Caco-2 (cell line): ENCODE measurements at regions of chr7 and their contacts with region 1.

Region 1: DNA sequence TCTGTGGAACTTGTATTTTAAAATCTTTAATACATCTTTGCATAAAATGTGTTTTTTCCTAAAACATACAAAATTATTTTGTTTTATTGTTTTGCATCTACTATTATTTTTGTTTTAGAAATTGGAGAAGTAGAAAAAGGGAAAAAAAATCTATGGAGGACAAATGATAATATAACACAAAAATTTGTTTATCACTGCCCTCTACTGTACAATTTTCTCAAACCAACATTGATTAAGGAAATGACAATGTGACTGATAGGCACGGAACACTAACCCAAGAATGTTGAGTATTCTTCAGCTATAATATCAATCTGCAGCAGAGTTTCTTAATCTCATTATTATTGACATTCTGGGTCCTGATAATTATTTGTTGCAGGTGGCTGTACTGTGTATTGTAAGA is 9.5 kb upstream of the ING3 start:
- DNase-seq: no peak
- H3K4me3 ChIP-seq: no peak overlapping the region
- H3K4me3 Mint-ChIP-seq: no peak overlapping the region
- H3K27ac Mint-ChIP-seq: no peak overlapping the region
- H3K4me1 ChIP-seq: no peaks in the 10 kb centered on the region
- H3K4me1 Mint-ChIP-seq: no peaks in the 10 kb centered on the region
- H3K27me3 ChIP-seq: no peaks in the 10 kb centered on the region; the same call in 1 of the 2 replicates
- H3K27me3 Mint-ChIP-seq: peaks cover under 1% of the 10 kb centered on the region
- CTCF ChIP-seq: no peak

Region 2: DNA sequence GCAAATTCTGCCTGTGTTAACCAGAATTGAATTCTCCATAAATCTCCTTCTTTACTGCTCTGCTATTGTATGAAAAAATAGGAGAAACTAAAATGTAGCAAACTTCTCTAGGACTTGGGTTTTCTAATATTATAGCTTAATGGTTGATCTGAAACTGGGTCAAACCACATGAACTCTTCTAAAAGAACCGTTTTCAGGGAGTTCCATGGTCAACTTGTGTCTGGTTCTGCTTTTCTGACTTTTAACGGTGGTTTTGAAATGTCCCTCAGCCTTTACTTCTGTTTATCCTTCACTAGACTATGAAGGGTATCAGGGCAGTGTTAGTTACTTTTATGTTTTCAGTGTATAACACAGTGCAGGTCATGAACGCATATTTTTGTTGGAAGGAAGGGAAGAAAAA is 325.4 kb before region 1 on chr7:
- CTCF ChIA-PET with region 1: no interaction called
- POLR2A ChIA-PET with region 1: no interaction called
- intact Hi-C with region 1: no loop called
- DNase-seq: no peak
- H3K4me3 ChIP-seq: no peak overlapping the region
- H3K4me3 Mint-ChIP-seq: no peak overlapping the region
- H3K27ac Mint-ChIP-seq: no peak overlapping the region
- H3K4me1 ChIP-seq: no peaks in the 10 kb centered on the region
- H3K4me1 Mint-ChIP-seq: no peaks in the 10 kb centered on the region
- H3K27me3 ChIP-seq: no peaks in the 10 kb centered on the region
- H3K27me3 Mint-ChIP-seq: no peaks in the 10 kb centered on the region
- CTCF ChIP-seq: no peak

Region 3: DNA sequence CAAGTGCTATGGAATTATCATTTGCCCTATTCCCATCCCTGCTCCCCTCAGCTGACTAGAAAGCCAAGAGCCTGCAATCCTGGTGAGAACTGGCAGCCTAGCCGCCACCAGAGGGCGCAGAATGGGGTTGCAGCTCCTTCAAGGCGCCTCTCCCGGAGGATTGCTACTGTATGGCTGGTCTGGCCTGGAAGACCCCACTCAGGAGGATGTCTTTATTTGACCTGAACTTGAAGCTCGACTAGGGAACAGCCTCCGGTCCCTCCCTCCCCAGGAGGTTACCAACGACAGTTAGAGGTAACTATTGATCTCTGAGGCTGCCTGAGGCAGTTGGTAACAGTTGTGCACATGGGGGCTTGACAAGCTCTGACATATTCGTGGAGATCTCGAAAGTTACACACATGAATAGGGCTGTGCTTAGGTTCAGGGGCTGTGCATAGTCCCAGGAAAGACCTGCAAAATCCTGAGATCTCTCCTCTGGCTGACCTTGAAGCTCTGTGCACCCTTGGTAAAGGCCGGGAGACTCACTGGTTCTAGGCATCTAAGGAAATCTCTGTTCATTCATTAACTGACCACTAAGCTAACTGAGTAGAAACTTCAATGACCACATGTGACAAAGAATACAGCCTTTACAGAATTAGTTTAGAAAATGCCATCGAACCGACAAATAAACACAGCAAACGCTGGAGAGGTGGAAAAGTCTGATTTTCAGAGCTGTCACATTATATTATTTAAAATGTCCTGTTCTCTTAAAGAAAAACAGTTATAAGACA is 148.8 kb before region 1 on chr7:
- CTCF ChIA-PET with region 1: no interaction called
- POLR2A ChIA-PET with region 1: no interaction called
- intact Hi-C with region 1: loop called (anchors 1 kb)
- DNase-seq: peak; percentile 77 to 79
- H3K4me3 ChIP-seq: no peak overlapping the region
- H3K4me3 Mint-ChIP-seq: no peak overlapping the region
- H3K27ac Mint-ChIP-seq: no peak overlapping the region
- H3K4me1 ChIP-seq: no peaks in the 10 kb centered on the region
- H3K4me1 Mint-ChIP-seq: no peaks in the 10 kb centered on the region
- H3K27me3 ChIP-seq: no peaks in the 10 kb centered on the region
- H3K27me3 Mint-ChIP-seq: peaks cover 4% of the 10 kb centered on the region
- CTCF ChIP-seq: peak; percentile 89 to 96

Region 4: DNA sequence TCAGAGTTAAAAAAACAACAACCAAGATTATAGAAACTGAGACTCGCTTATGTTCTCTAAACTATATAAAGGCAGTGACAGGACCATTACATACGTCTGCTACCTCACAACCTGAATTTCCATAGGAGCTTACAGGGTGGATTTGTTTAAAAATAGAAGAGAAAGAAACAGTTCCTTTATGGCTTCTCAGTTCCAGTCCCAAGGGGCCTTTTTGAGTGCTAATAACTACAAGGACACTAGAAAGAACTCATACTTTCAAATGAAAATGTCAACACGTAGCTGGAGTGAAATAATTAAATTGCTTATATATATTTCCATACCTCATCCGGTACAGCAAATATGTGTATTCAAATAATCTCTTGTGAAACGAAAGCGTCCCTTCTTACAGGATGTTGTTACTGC is 102.8 kb before region 1 on chr7:
- CTCF ChIA-PET with region 1: no interaction called
- POLR2A ChIA-PET with region 1: no interaction called
- intact Hi-C with region 1: no loop called
- DNase-seq: no peak
- H3K4me3 ChIP-seq: no peak overlapping the region
- H3K4me3 Mint-ChIP-seq: no peak overlapping the region
- H3K27ac Mint-ChIP-seq: no peak overlapping the region
- H3K4me1 ChIP-seq: no peaks in the 10 kb centered on the region
- H3K4me1 Mint-ChIP-seq: no peaks in the 10 kb centered on the region
- H3K27me3 ChIP-seq: no peaks in the 10 kb centered on the region
- H3K27me3 Mint-ChIP-seq: no peaks in the 10 kb centered on the region
- CTCF ChIP-seq: no peak